Caco-2 (cell line): ENCODE measurements at regions of chr9 and their contacts with region 1.

Region 1: GRCh38 chr9:101311758-101312420 is 72.9 kb downstream of the BAAT start:
- DNase-seq: peak in 1 of 2 experiments; percentile 72
- H3K4me3 ChIP-seq: no peak overlapping the region
- H3K4me3 Mint-ChIP-seq: no peak overlapping the region
- H3K27ac Mint-ChIP-seq: no peak overlapping the region
- H3K4me1 ChIP-seq: peaks cover 11% of the 10 kb centered on the region
- H3K4me1 Mint-ChIP-seq: peaks cover 6% of the 10 kb centered on the region
- H3K27me3 ChIP-seq: no peaks in the 10 kb centered on the region
- H3K27me3 Mint-ChIP-seq: no peaks in the 10 kb centered on the region
- CTCF ChIP-seq: peak; percentile 48 to 66

Region 2: GRCh38 chr9:100700689-100701318 is 611.1 kb before region 1 on chr9:
- CTCF ChIA-PET with region 1: no interaction called
- POLR2A ChIA-PET with region 1: no interaction called
- intact Hi-C with region 1: loop called (anchors 2 kb)
- DNase-seq: peak in 1 of 2 experiments; percentile 43
- H3K4me3 ChIP-seq: no peak overlapping the region
- H3K4me3 Mint-ChIP-seq: no peak overlapping the region
- H3K27ac Mint-ChIP-seq: no peak overlapping the region
- H3K4me1 ChIP-seq: no peaks in the 10 kb centered on the region
- H3K4me1 Mint-ChIP-seq: no peaks in the 10 kb centered on the region
- H3K27me3 ChIP-seq: no peaks in the 10 kb centered on the region
- H3K27me3 Mint-ChIP-seq: no peaks in the 10 kb centered on the region
- CTCF ChIP-seq: peak; percentile 39 to 53

Region 3: GRCh38 chr9:100714372-100715099 is 597.4 kb before region 1 on chr9:
- CTCF ChIA-PET with region 1: interaction called, 3 read pairs
- POLR2A ChIA-PET with region 1: no interaction called
- intact Hi-C with region 1: loop called (anchors 1 kb)
- DNase-seq: peak; percentile 57 to 73
- H3K4me3 ChIP-seq: no peak overlapping the region
- H3K4me3 Mint-ChIP-seq: no peak overlapping the region
- H3K27ac Mint-ChIP-seq: no peak overlapping the region
- H3K4me1 ChIP-seq: no peaks in the 10 kb centered on the region
- H3K4me1 Mint-ChIP-seq: no peaks in the 10 kb centered on the region
- H3K27me3 ChIP-seq: no peaks in the 10 kb centered on the region; the same call in 1 of the 2 replicates
- H3K27me3 Mint-ChIP-seq: no peaks in the 10 kb centered on the region
- CTCF ChIP-seq: peak; percentile 74 to 80

Region 4: DNA sequence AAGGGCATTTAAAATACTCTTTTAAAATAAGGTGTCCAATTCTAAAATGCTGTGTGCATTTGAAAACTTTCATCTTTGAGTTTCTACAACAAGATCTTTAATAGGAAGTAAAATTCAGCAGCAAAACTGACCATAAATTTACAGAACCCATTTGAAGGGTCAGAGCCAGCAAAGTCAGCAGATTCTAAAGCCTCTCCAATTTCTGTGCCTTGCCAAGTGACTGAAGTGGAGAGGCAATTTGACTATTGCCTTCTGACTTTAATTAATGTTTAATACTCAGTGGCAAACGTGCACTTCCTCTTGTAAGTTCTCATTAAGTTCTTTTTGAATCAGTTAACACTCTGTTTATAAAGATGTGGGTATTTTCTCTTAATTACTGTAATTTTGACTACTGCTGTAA is 82.3 kb before region 1 on chr9:
- CTCF ChIA-PET with region 1: interaction called, 4 read pairs
- POLR2A ChIA-PET with region 1: no interaction called
- intact Hi-C with region 1: loop called (anchors 1 kb)
- DNase-seq: no peak
- H3K4me3 ChIP-seq: no peak overlapping the region
- H3K4me3 Mint-ChIP-seq: no peak overlapping the region
- H3K27ac Mint-ChIP-seq: no peak overlapping the region
- H3K4me1 ChIP-seq: no peaks in the 10 kb centered on the region
- H3K4me1 Mint-ChIP-seq: no peaks in the 10 kb centered on the region
- H3K27me3 ChIP-seq: no peaks in the 10 kb centered on the region
- H3K27me3 Mint-ChIP-seq: peaks cover 9% of the 10 kb centered on the region
- CTCF ChIP-seq: no peak

Region 5: GRCh38 chr9:101235105-101235866 is 76.6 kb before region 1 on chr9:
- CTCF ChIA-PET with region 1: interaction called, 7 read pairs
- POLR2A ChIA-PET with region 1: interaction called, 6 read pairs
- intact Hi-C with region 1: loop called (anchors 2 kb)
- DNase-seq: peak in 1 of 2 experiments; percentile 16
- H3K4me3 ChIP-seq: no peak overlapping the region
- H3K4me3 Mint-ChIP-seq: no peak overlapping the region
- H3K27ac Mint-ChIP-seq: no peak overlapping the region
- H3K4me1 ChIP-seq: no peaks in the 10 kb centered on the region
- H3K4me1 Mint-ChIP-seq: no peaks in the 10 kb centered on the region
- H3K27me3 ChIP-seq: no peaks in the 10 kb centered on the region
- H3K27me3 Mint-ChIP-seq: peaks cover 5% of the 10 kb centered on the region
- CTCF ChIP-seq: peak; percentile 48 to 56

Region 6: GRCh38 chr9:101246691-101247090 is 65.2 kb before region 1 on chr9:
- CTCF ChIA-PET with region 1: no interaction called
- POLR2A ChIA-PET with region 1: no interaction called
- intact Hi-C with region 1: no loop called
- DNase-seq: no peak
- H3K4me3 ChIP-seq: no peak overlapping the region
- H3K4me3 Mint-ChIP-seq: no peak overlapping the region
- H3K27ac Mint-ChIP-seq: no peak overlapping the region
- H3K4me1 ChIP-seq: no peaks in the 10 kb centered on the region
- H3K4me1 Mint-ChIP-seq: no peaks in the 10 kb centered on the region
- H3K27me3 ChIP-seq: no peaks in the 10 kb centered on the region
- H3K27me3 Mint-ChIP-seq: peaks cover 17% of the 10 kb centered on the region
- CTCF ChIP-seq: no peak

Region 7: GRCh38 chr9:101387871-101388506 is 76.1 kb after region 1 on chr9:
- CTCF ChIA-PET with region 1: interaction called, 7 read pairs
- POLR2A ChIA-PET with region 1: no interaction called
- intact Hi-C with region 1: loop called (anchors 1 kb)
- DNase-seq: peak; percentile 36 to 46
- H3K4me3 ChIP-seq: no peak overlapping the region
- H3K4me3 Mint-ChIP-seq: no peak overlapping the region
- H3K27ac Mint-ChIP-seq: no peak overlapping the region
- H3K4me1 ChIP-seq: 0 out of 2 replicates have a peak, but pooled peaks cover 3% of the 10 kb centered on the region
- H3K4me1 Mint-ChIP-seq: peaks cover 13% of the 10 kb centered on the region
- H3K27me3 ChIP-seq: no peaks in the 10 kb centered on the region
- H3K27me3 Mint-ChIP-seq: no peaks in the 10 kb centered on the region
- CTCF ChIP-seq: peak; percentile 43 to 46

Region 8: DNA sequence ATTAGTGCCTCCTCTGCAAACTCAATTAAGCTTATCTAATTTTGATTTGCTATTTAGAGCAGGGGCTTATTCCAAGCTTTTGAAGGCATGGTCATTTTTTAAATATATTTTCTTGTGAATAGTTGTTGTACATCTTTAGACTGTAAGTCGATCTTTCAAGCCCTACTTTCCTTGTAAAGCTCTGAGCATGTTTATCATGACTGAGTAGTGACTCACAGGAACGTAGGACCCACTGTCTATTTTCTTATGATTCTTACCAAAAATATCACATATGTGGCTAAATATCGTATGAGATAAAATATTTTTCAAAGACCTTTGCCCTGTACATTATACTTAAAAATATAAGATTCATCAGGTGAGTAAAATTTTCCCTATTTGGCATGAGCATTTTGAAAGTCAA is 866.9 kb after region 1 on chr9:
- CTCF ChIA-PET with region 1: no interaction called
- POLR2A ChIA-PET with region 1: no interaction called
- intact Hi-C with region 1: no loop called
- DNase-seq: no peak
- H3K4me3 ChIP-seq: no peak overlapping the region
- H3K4me3 Mint-ChIP-seq: no peak overlapping the region
- H3K27ac Mint-ChIP-seq: no peak overlapping the region
- H3K4me1 ChIP-seq: no peaks in the 10 kb centered on the region
- H3K4me1 Mint-ChIP-seq: no peaks in the 10 kb centered on the region
- H3K27me3 ChIP-seq: no peaks in the 10 kb centered on the region
- H3K27me3 Mint-ChIP-seq: no peaks in the 10 kb centered on the region
- CTCF ChIP-seq: no peak